ENCODE measurements at regions of chr5 and their contacts with region 1.

Region 1: GRCh38 chr5:141623186-141623585 is 4.4 kb upstream of the DIAPH1 start:
- DNase-seq: no peak
- H3K4me3 ChIP-seq: no peak overlapping the region
- H3K27ac ChIP-seq: no peak overlapping the region
- H3K4me1 ChIP-seq: peaks cover 15% of the 10 kb centered on the region
- H3K27me3 ChIP-seq: no peaks in the 10 kb centered on the region
- CTCF ChIP-seq: no peak

Region 2: DNA sequence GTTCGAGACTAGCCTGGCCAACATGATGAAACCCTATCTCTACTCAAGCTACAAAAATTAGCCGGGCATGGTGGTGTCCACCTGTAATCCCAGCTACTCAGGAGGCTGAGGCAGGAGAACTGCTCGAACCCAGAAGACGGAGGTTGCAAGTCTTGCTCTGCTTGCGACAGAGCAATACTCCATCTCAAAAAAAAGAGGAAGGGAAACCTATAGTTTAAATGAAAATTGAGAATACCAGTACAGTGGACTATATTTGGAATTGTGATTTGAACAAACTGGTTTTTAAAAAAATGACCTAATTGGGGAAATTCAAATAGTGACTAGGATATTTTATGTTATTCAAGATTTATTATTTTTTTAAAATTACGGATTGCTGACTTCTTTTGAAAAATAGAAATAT is 37.6 kb before region 1 on chr5:
- intact Hi-C with region 1: loop called (anchors 5 kb)
- DNase-seq: no peak
- H3K4me3 ChIP-seq: no peak overlapping the region
- H3K27ac ChIP-seq: no peak overlapping the region
- H3K4me1 ChIP-seq: no peaks in the 10 kb centered on the region
- H3K27me3 ChIP-seq: no peaks in the 10 kb centered on the region
- CTCF ChIP-seq: no peak